Panc1 (cell line): ENCODE measurements at regions of chr14 and their contacts with region 1.

Region 1: DNA sequence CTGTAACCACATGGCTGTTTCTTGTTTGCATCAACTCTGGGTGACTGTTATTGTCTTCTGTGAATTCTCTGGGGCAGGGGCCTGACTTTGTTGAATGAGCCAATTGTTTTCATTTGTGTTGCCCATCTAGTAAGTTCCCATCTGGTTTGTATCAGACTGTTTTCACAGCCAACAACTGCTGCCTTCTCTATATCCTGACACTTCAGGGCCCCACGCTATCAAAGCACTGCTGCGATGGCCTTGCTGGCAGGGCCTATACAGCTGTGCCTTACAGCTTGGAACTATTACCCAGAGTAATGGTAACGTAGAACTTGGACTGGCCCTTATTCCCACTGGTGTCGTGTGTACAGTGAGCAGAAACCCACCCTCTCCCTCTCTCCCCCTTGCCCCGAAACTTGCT is 104.3 kb upstream of the DACT1 start:
- DNase-seq: no peak
- ATAC-seq: no peak
- H3K4me3 ChIP-seq: no peak overlapping the region
- H3K27ac ChIP-seq: no peak overlapping the region
- H3K4me1 ChIP-seq: no peaks in the 10 kb centered on the region
- H3K27me3 ChIP-seq: no peaks in the 10 kb centered on the region
- CTCF ChIP-seq: no peak

Region 2: GRCh38 chr14:58227096-58227819 is 306.2 kb before region 1 on chr14:
- CTCF ChIA-PET with region 1: interaction called, 11 read pairs
- POLR2A ChIA-PET with region 1: no interaction called
- in situ Hi-C with region 1: no loop called
- intact Hi-C with region 1: no loop called
- DNase-seq: no peak
- ATAC-seq: no peak
- H3K4me3 ChIP-seq: no peak overlapping the region
- H3K27ac ChIP-seq: no peak overlapping the region
- H3K4me1 ChIP-seq: no peaks in the 10 kb centered on the region
- H3K27me3 ChIP-seq: no peaks in the 10 kb centered on the region
- CTCF ChIP-seq: no peak